ENCODE measurements at regions of chr16 and their contacts with region 1.

Region 1: DNA sequence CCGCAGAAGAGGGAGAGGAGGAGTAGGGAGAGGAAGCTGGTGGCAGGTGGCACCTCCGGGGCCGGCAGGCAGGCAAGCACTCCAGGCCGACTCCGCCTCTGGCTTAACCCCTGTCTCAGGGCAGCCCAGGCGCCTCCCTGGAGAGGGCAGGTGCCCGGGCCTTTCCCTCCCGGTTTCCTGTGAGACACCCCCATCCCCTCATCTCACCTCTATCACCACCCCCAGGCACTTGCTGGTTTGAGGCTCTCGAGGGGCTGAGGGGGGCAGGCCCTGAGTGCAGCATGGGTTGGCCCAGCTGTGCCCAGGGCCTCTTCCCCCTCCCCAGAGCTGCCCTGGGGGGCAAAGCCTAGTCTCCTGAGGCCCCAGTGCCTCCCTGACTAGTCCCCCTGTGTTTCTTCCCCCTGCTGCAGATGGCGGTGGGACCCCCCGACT is 6.0 kb downstream of the DOC2A start:
- DNase-seq: no peak
- H3K4me3 ChIP-seq: no peak overlapping the region
- H3K27ac ChIP-seq: no peak overlapping the region
- H3K4me1 ChIP-seq: no peaks in the 10 kb centered on the region
- H3K27me3 ChIP-seq: peaks cover 3% of the 10 kb centered on the region
- CTCF ChIP-seq: no peak
- POLR2A ChIP-seq: no peak

Region 2: GRCh38 chr16:29720699-29721098 is 284.1 kb before region 1 on chr16:
- intact Hi-C with region 1: no loop called
- DNase-seq: peak in 1 of 7 donors; percentile 16
- H3K4me3 ChIP-seq: no peak overlapping the region
- H3K27ac ChIP-seq: no peak overlapping the region
- H3K4me1 ChIP-seq: no peaks in the 10 kb centered on the region
- H3K27me3 ChIP-seq: no peaks in the 10 kb centered on the region
- CTCF ChIP-seq: no peak
- POLR2A ChIP-seq: no peak

Region 3: DNA sequence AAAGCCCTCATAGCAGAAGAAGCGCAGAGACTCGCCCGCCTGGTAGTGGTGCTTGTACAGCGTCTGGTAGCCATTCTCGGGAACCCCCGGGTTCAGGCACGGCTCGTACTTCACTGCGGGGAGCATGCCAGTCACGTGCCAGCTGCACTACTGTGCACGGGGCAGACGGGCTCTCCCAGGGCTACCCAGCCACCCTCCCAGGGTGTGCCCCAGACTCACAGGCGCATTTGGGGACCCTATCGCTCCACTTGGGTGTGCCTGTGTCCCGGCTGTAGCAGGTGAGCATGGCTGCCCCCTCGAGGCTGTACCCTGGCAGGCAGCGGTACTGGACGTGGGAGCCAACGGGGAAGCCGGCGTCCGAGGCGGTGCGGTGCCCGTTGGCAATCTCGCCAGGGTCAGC is 131.5 kb before region 1 on chr16:
- intact Hi-C with region 1: loop called in 1 of 2 experiments (anchors 5 kb)
- DNase-seq: no peak
- H3K4me3 ChIP-seq: no peak overlapping the region
- H3K27ac ChIP-seq: no peak overlapping the region
- H3K4me1 ChIP-seq: peaks cover 0 to 3% of the 10 kb centered on the region in 2 donors
- H3K27me3 ChIP-seq: no peaks in the 10 kb centered on the region
- CTCF ChIP-seq: no peak
- POLR2A ChIP-seq: no peak

Region 4: DNA sequence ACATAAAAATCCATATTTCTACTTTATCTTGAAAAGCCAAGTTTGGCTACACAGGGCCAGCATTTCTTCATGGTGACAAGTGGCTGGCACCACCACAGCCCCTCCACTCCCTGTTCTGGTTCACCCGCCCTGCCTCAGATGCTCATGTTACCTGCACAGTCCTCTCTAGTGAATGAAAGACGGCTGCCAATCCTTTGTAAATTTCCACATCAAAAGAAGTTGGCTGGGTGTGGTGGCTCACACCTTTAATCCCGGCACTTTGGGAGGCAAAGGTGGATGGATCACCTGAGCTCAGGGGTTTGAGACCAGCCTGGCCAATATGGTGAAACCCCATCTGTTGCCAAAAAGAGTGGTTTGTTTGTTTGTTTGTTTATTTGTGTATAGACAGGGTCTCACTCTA is 158.7 kb after region 1 on chr16:
- intact Hi-C with region 1: no loop called
- DNase-seq: no peak
- H3K4me3 ChIP-seq: no peak overlapping the region
- H3K27ac ChIP-seq: no peak overlapping the region
- H3K4me1 ChIP-seq: no peaks in the 10 kb centered on the region
- H3K27me3 ChIP-seq: no peaks in the 10 kb centered on the region
- CTCF ChIP-seq: no peak
- POLR2A ChIP-seq: no peak

Measured in adrenal gland (tissue), 19 donors.